Natural killer cell (primary cell): ENCODE measurements at regions of chr2 and their contacts with region 1.

Region 1: GRCh38 chr2:24164125-24164973 is 10.5 kb upstream of the FAM228A start:
- DNase-seq: peak; percentile 33 to 49
- ATAC-seq: peak; percentile 59 to 82 (median 61)
- H3K4me3 ChIP-seq: no peak overlapping the region
- H3K4me3 Mint-ChIP-seq: no peak overlapping the region
- H3K27ac ChIP-seq: no peak overlapping the region
- H3K27ac Mint-ChIP-seq: no peak overlapping the region
- H3K4me1 ChIP-seq: no peaks in the 10 kb centered on the region
- H3K4me1 Mint-ChIP-seq: no peaks in the 10 kb centered on the region
- H3K27me3 ChIP-seq: no peaks in the 10 kb centered on the region
- H3K27me3 Mint-ChIP-seq: no peaks in the 10 kb centered on the region
- CTCF ChIP-seq: peak; percentile 70

Region 2: GRCh38 chr2:23824777-23825212 is 339.6 kb before region 1 on chr2:
- intact Hi-C with region 1: loop called (anchors 2 kb)
- DNase-seq: peak in 1 of 2 donors; percentile 75
- ATAC-seq: peak; percentile 70 to 81 (median 71)
- H3K4me3 ChIP-seq: no peak overlapping the region
- H3K4me3 Mint-ChIP-seq: no peak overlapping the region
- H3K27ac ChIP-seq: no peak overlapping the region
- H3K27ac Mint-ChIP-seq: peak overlapping the region in 1 of 2 donors; percentile 11
- H3K4me1 ChIP-seq: no peaks in the 10 kb centered on the region
- H3K4me1 Mint-ChIP-seq: no peaks in the 10 kb centered on the region
- H3K27me3 ChIP-seq: no peaks in the 10 kb centered on the region
- H3K27me3 Mint-ChIP-seq: no peaks in the 10 kb centered on the region
- CTCF ChIP-seq: peak; percentile 81